Dorsolateral prefrontal cortex (tissue), 120 donors: ENCODE measurements at regions of chr14 and their contacts with region 1.

Region 1: GRCh38 chr14:59189786-59190771 is 1.6 kb downstream of the DAAM1 start:
- DNase-seq: peak; percentile 49 to 89 (median 77)
- H3K4me3 ChIP-seq: peak overlapping the region; percentile 67 to 99 (median 93)
- H3K27ac ChIP-seq: peak overlapping the region in 54 of 59 donors; percentile 73 to 96 (median 88)
- H3K27me3 ChIP-seq: no peaks in the 10 kb centered on the region
- CTCF ChIP-seq: peak in 2 of 56 donors; percentile 12 to 15

Region 2: GRCh38 chr14:59215325-59216181 is 25.5 kb after region 1 on chr14:
- intact Hi-C with region 1: loop called in 1 of 2 experiments (anchors 2 kb)
- DNase-seq: peak; percentile 56 to 85 (median 80)
- H3K4me3 ChIP-seq: peak overlapping the region in 6 of 59 donors; percentile 0 to 36 (median 14)
- H3K27ac ChIP-seq: peak overlapping the region in 27 of 59 donors; percentile 3 to 65 (median 29)
- H3K27me3 ChIP-seq: no peaks in the 10 kb centered on the region
- CTCF ChIP-seq: peak in 7 of 56 donors; percentile 2 to 29 (median 12)